HepG2 (cell line): ENCODE measurements at regions of chr4 and their contacts with region 1.

Region 1: DNA sequence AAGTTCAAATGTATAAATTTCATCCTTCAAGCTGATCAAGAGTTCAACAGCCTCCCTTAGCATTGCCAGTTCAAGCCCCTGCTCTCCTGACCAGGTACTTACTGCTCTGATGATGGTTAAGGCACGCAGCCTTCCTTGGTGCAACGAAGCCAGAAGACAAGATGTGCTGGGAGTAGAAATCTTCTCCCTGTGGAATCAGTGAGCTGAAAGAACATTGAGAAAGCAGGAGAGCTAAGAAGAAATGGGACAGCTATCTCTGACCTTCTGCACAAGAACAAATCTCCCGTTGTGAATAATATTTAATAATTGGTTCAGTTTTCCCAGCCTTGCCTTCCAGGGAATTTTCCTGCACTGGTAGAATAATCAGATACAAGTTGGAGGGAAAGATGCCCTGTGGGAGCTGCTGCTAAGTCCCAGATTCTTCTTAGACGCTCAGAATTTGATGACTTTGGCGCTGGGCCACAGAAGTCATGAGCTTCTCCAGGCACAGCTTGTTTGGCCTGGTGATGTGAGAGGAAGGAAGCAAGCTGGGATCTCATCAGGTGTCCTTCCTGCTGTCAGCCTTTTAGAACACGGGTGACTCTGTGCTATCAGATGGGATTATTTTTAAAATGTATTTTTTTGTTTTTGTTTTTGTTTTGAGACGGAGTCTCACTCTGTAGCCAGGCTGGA is 77.8 kb downstream of the CD38 start:
- DNase-seq: no peak
- ATAC-seq: no peak
- H3K4me3 ChIP-seq: no peak overlapping the region
- H3K27ac ChIP-seq: no peak overlapping the region
- H3K4me1 ChIP-seq: no peaks in the 10 kb centered on the region
- H3K27me3 ChIP-seq: peaks cover 0 to 13% of the 10 kb centered on the region in 2 experiments; a peak in 2 of 5 replicates
- CTCF ChIP-seq: no peak
- EP300 ChIP-seq: no peak
- POLR2A ChIP-seq: no peak
- RAD21 ChIP-seq: no peak

Region 2: DNA sequence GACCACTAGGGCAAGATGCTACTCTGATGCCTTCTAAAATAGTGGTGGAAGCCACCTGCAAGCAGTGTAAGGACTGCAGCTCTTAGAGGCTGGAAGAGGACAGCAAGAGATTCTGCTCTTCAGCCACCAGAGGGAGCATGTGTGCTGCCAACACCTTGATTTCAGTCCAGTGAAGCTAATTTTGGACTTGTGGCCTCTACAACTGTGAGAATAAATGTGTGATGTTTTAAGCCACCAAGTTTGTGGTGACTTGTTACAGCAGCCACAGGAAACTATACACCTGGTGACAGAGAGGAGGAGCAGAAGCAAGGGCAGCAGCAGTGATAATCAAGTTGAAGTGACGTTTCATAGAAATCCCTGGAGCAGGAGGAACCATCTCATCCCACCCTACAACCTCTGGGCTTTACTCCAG is 26.7 kb after region 1 on chr4:
- CTCF ChIA-PET with region 1: no interaction called
- POLR2A ChIA-PET with region 1: no interaction called
- in situ Hi-C with region 1: no loop called
- intact Hi-C with region 1: loop called (anchors 1 kb)
- DNase-seq: peak; percentile 64
- ATAC-seq: peak; percentile 96
- H3K4me3 ChIP-seq: no peak overlapping the region
- H3K27ac ChIP-seq: no peak overlapping the region
- H3K4me1 ChIP-seq: no peaks in the 10 kb centered on the region
- H3K27me3 ChIP-seq: no peaks in the 10 kb centered on the region; a peak in 1 of 5 replicates
- CTCF ChIP-seq: peak; percentile 89
- EP300 ChIP-seq: no peak
- POLR2A ChIP-seq: no peak
- RAD21 ChIP-seq: peak; percentile 54